SK-N-SH (cell line): ENCODE measurements at regions of chr16 and their contacts with region 1.

Region 1: DNA sequence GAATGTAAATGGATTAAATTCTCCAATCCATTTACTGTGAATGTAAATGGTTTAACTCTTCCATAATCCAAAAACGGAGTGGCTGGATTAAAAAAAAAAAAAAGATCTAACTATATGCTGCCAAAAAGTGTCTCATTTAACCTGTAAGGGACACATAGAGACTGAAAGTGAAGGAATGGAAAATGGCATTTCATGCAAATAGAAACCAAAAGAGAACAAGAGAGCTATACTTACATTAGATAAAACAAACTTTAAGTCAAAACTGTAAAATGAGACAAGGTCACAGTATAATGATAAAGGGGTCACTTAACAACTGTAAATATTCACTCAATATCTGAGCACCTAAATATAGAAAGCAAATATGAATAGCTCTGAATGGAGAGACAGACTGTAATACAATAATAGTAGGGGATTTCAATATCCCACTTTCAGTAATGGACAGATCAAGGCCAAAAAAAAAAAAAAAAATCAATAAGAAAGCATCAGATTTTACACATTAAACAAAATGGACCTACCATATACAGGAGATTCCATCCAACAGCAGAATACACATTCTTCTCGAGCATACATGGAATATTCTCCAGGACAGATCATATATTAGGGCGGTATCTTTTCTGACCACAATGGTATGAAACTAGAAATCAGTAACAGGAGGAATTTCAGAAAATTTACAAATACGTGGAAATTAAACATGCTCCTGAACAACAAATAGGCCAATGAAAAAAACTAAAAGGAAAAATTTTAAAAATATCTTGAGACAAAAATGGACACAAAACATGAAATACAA is 36.4 kb downstream of the CDR2 start:
- DNase-seq: no peak
- H3K4me3 ChIP-seq: no peak overlapping the region
- H3K27ac ChIP-seq: no peak overlapping the region
- H3K4me1 ChIP-seq: no peaks in the 10 kb centered on the region
- H3K27me3 ChIP-seq: no peaks in the 10 kb centered on the region
- CTCF ChIP-seq: no peak
- EP300 ChIP-seq: no peak
- RAD21 ChIP-seq: no peak

Region 2: GRCh38 chr16:22321339-22322001 is 16.6 kb before region 1 on chr16:
- CTCF ChIA-PET with region 1: interaction called, 13 read pairs
- POLR2A ChIA-PET with region 1: no interaction called
- DNase-seq: peak; percentile 84
- H3K4me3 ChIP-seq: peak overlapping the region in 1 of 2 experiments; percentile 14; a peak in 1 of 4 replicates
- H3K27ac ChIP-seq: no peak overlapping the region; a peak in 1 of 4 replicates
- H3K4me1 ChIP-seq: peaks cover 0 to 3% of the 10 kb centered on the region in 2 experiments; a peak in 1 of 4 replicates
- H3K27me3 ChIP-seq: no peaks in the 10 kb centered on the region
- CTCF ChIP-seq: peak; percentile 98
- EP300 ChIP-seq: no peak
- RAD21 ChIP-seq: peak; percentile 94